Right cardiac atrium (tissue), 5 donors: ENCODE measurements at regions of chr1 and their contacts with region 1.

Region 1: GRCh38 chr1:93629099-93630059 is 52.3 kb downstream of the BCAR3 start:
- DNase-seq: no peak
- ATAC-seq: peak; percentile 68 to 73
- H3K4me3 ChIP-seq: no peak overlapping the region
- H3K27ac ChIP-seq: no peak overlapping the region
- H3K4me1 ChIP-seq: peaks cover 11% of the 10 kb centered on the region
- H3K27me3 ChIP-seq: no peaks in the 10 kb centered on the region

Region 2: GRCh38 chr1:93437976-93438605 is 191.3 kb before region 1 on chr1:
- intact Hi-C with region 1: loop called in 3 of 4 experiments (anchors 5 to 10 kb)
- DNase-seq: no peak
- ATAC-seq: peak in 1 of 2 donors; percentile 45
- H3K4me3 ChIP-seq: no peak overlapping the region
- H3K27ac ChIP-seq: no peak overlapping the region
- H3K4me1 ChIP-seq: no peaks in the 10 kb centered on the region
- H3K27me3 ChIP-seq: no peaks in the 10 kb centered on the region

Region 3: GRCh38 chr1:93447516-93448291 is 181.7 kb before region 1 on chr1 and contains the start of gene FNBP1L:
- intact Hi-C with region 1: loop called in 2 of 4 experiments (anchors 10 kb)
- DNase-seq: peak; percentile 81 to 92 (median 89)
- ATAC-seq: peak; percentile 97 to 98
- H3K4me3 ChIP-seq: peak within 1 kb of the TSS; percentile 98
- H3K27ac ChIP-seq: peak within 1 kb of the TSS; percentile 91
- H3K4me1 ChIP-seq: peaks cover 2% of the 10 kb centered on the region
- H3K27me3 ChIP-seq: no peaks in the 10 kb centered on the region
- total RNA-seq, gene FNBP1L: 15.8 to 21.8 (median 20.0) TPM

Region 4: GRCh38 chr1:93680757-93681550 is 51.6 kb after region 1 on chr1:
- intact Hi-C with region 1: loop called in 3 of 4 experiments (anchors 5 kb)
- DNase-seq: peak; percentile 86 to 95 (median 92)
- ATAC-seq: peak; percentile 89 to 92
- H3K4me3 ChIP-seq: peak overlapping the region; percentile 87
- H3K27ac ChIP-seq: peak overlapping the region; percentile 67
- H3K4me1 ChIP-seq: peaks cover 7% of the 10 kb centered on the region
- H3K27me3 ChIP-seq: no peaks in the 10 kb centered on the region

Region 5: DNA sequence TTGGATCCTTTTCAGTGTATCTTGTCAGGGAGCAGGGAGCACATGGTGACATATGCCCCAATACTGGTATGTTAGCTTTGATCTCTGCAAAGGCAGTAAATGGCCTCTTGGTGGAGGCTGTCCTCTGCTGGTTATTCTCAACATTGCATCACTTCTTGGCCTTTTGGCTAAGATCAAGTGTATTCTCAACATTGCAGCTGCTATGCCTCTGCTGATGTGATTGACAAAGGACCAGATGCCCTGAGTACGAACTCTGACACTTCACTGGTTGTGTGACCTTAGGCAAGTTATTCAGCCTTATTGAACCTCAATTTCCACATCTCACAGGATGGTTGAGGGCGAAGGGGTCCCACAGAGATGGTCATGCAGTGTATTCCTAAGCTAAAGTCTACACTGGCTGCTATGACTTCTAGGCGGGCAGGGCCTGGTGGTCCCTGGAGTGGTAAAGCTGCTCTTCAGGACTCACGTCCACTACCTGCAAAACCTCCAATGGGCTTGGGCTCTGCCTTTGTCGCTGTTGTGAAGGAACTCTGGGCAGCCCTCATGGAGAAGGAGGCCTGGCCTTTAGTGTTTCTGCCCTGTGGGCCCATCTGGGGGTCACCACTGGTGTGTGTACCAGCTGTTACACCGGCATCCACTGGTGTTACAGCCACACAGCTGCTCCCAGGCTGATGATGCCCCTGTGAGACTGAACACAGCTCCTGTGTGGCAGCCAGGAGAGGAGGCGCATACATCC is 184.8 kb after region 1 on chr1:
- intact Hi-C with region 1: loop called (anchors 1 to 5 kb)
- DNase-seq: peak in 2 of 3 donors; percentile 23 to 50
- ATAC-seq: peak; percentile 71 to 78
- H3K4me3 ChIP-seq: no peak overlapping the region
- H3K27ac ChIP-seq: no peak overlapping the region
- H3K4me1 ChIP-seq: peaks cover 5% of the 10 kb centered on the region
- H3K27me3 ChIP-seq: no peaks in the 10 kb centered on the region

Region 6: DNA sequence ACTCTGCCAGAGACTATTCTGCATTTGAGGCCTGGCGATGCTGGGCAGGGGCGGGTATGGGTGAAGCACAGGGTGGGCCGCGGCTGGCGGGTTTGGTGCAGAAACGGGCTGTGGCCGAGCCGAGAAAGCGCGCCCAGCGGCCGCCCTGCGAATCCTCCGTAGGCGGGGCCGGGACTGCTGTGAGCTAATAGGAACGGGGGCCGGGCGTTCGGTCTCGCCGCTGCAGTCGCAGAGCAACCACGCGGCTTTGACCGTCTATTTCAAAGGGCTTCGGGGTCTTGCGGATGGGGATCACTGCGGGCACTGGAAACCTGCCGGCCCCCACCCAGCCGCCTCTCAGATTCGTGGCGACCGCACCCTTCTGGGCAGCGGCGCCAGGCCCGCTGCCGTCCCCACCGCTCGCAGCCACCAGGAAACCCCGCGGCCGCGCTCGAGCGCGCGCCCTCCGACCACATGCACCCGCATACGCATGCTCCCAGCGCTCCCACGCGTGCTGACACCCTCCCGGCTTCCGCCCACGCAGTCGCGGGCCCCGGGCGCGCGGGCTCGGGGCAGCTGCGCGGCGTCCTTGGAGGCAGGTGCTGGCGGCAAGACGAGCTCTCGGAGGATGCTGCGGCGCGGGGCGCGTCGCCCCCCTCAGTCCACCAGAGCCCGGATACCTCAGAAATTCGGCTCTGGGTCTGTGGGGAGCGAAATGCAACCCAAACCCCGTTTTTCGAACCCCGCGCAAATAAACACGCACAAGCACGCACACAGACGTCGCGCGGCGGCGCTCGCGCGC is 217.0 kb after region 1 on chr1:
- intact Hi-C with region 1: loop called in 1 of 4 experiments (anchors 10 kb)
- DNase-seq: peak; percentile 90 to 97 (median 95)
- ATAC-seq: peak; percentile 76 to 82
- H3K4me3 ChIP-seq: peak overlapping the region; percentile 68
- H3K27ac ChIP-seq: peak overlapping the region; percentile 98
- H3K4me1 ChIP-seq: peaks cover 3% of the 10 kb centered on the region
- H3K27me3 ChIP-seq: no peaks in the 10 kb centered on the region